Dorsolateral prefrontal cortex (tissue), 120 donors: ENCODE measurements at regions of chr2 and their contacts with region 1.

Region 1: GRCh38 chr2:102240640-102241370 is 54.0 kb downstream of the IL1RL2 start:
- DNase-seq: peak; percentile 58 to 91 (median 87)
- H3K4me3 ChIP-seq: peak overlapping the region in 1 of 59 donors; percentile 21
- H3K27ac ChIP-seq: peak overlapping the region in 23 of 59 donors; percentile 13 to 83 (median 47)
- H3K27me3 ChIP-seq: no peaks in the 10 kb centered on the region
- CTCF ChIP-seq: peak; percentile 86 to 100 (median 98)

Region 2: GRCh38 chr2:102020596-102021181 is 220.1 kb before region 1 on chr2:
- intact Hi-C with region 1: loop called (anchors 2 kb)
- DNase-seq: peak; percentile 32 to 89 (median 84)
- H3K4me3 ChIP-seq: no peak overlapping the region
- H3K27ac ChIP-seq: no peak overlapping the region
- H3K27me3 ChIP-seq: peaks cover 0 to 9% (median 0%) of the 10 kb centered on the region in 45 donors
- CTCF ChIP-seq: peak; percentile 74 to 100 (median 98)

Region 3: DNA sequence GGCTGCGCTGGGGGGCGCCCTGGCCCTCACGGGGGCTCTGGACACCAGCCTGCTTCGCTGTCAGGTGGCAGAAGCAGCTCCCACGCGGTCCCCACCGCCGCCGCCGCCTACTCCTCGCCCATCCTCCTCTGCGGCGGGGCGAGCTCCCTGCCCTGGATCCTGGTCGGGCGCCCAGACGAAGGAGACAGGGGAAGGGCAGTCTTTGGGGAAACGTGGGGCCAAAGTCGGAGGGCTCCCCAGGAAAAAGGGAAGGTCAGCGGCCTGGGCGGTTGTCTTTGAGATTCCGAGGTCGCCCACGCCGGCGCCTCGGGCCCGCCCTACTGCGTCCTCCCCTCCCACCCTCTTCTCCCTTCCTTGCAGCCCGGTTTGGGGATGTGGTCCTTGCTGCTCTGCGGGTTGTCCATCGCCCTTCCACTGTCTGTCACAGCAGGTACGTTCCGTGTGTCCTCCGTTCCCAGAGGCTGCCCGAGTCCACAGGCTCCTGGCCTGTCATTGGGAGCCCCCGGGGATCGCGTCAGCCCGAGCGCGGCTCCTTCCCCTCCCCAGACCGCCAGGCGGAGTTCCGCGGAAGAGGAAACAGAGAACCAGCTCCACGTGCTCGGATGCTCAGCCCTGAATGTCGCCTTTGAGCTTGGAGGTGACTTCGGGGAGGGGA is 53.2 kb before region 1 on chr2:
- intact Hi-C with region 1: loop called in 1 of 2 experiments (anchors 5 kb)
- DNase-seq: peak in 8 of 10 donors; percentile 7 to 73 (median 46)
- H3K4me3 ChIP-seq: peak overlapping the region; percentile 39 to 83 (median 65)
- H3K27ac ChIP-seq: peak overlapping the region in 24 of 59 donors; percentile 5 to 80 (median 39)
- H3K27me3 ChIP-seq: peaks cover 0 to 6% (median 0%) of the 10 kb centered on the region in 45 donors
- CTCF ChIP-seq: peak in 36 of 56 donors; percentile 11 to 51 (median 30)

Region 4: GRCh38 chr2:102355526-102356380 is 114.9 kb after region 1 on chr2 and contains the start of gene IL18R1:
- intact Hi-C with region 1: loop called in 1 of 2 experiments (anchors 10 kb)
- DNase-seq: peak; percentile 6 to 80 (median 44)
- H3K4me3 ChIP-seq: peak within 1 kb of the TSS; percentile 43 to 84 (median 70)
- H3K27ac ChIP-seq: peak within 1 kb of the TSS in 11 of 59 donors; percentile 42 to 78 (median 61)
- H3K27me3 ChIP-seq: peaks cover 0 to 9% (median 0%) of the 10 kb centered on the region in 45 donors
- CTCF ChIP-seq: peak; percentile 42 to 91 (median 72)
- total RNA-seq, gene IL18R1: 0.22 to 10.2 (median 2.3) TPM in 116 of 120 experiments, not detected in the others

Region 5: DNA sequence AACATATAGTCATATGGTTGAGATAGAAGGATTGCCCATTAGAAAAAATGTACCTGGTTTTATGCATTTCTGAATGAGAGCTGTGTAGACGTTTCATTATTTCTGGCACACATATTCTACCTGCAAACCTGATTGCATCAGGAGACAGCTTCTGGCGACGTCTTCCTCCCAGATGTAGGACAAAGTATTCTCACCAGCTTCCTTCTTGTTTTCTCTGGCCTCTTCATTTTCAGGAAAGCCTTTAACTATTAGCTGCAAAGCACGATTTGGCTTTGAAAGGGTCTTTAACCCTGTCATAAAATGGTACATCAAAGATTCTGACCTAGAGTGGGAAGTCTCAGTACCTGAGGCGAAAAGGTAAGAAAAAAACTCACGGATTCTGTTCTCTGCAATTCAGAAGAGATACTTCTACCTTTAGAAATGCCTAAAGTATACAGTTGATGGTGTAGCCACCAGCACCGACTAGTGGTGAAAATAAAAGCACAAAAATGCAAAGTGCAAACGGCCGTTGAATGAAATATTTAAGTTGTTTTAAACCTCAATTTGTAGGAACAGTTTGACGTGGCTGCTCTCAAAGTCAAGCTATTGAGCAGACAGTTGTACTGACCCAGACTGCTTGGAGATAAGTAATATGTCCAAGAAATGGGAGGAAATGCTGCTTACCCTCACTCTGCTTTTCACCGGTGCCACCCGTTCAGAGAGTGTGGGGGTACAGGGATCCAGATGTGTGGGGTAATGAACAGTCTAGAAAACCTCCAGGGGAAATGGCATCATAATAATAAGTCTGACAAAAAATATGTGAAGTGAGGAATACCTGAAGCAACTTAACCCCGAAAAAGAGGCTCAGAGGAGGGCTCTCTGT is 202.4 kb after region 1 on chr2:
- intact Hi-C with region 1: loop called in 1 of 2 experiments (anchors 10 kb)
- DNase-seq: peak in 2 of 10 donors; percentile 31 to 34
- H3K4me3 ChIP-seq: no peak overlapping the region
- H3K27ac ChIP-seq: no peak overlapping the region
- H3K27me3 ChIP-seq: peaks cover 0 to 12% (median 0%) of the 10 kb centered on the region in 45 donors
- CTCF ChIP-seq: peak; percentile 45 to 81 (median 68)